ENCODE measurements at regions of chr15 and their contacts with region 1.

Region 1: GRCh38 chr15:39312984-39313383 is 267.9 kb upstream of the THBS1 start:
- DNase-seq: peak in 3 of 4 experiments; percentile 9 to 11 (median 10)
- ATAC-seq: no peak
- H3K4me3 ChIP-seq: no peak overlapping the region
- H3K27ac ChIP-seq: no peak overlapping the region
- H3K4me1 ChIP-seq: no peaks in the 10 kb centered on the region
- H3K27me3 ChIP-seq: no peaks in the 10 kb centered on the region
- CTCF ChIP-seq: peak in 2 of 3 experiments; percentile 24 to 34; a peak in 3 of 6 replicates
- EP300 ChIP-seq: no peak
- POLR2A ChIP-seq: no peak
- RAD21 ChIP-seq: peak in 1 of 2 experiments; percentile 48; a peak in 2 of 4 replicates

Region 2: DNA sequence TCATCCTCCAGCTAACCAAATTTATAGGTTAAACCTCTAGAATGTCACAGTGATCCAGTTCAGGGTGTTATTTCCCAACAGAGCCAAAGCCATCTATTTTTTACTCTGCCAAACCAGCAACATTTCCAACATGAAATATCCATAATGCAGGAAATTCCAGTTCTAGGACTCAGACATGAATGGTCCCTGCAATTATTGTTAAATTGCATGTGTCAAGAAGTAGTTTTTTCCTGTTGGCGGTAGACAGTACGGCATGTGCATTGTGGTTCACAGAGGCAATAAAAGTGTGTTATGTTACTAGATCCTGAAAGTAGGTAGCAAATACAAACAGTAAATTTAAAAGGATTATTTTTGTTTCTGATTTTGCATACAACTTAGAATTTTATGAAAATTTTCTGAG is 52.2 kb after region 1 on chr15:
- CTCF ChIA-PET with region 1: no interaction called
- POLR2A ChIA-PET with region 1: no interaction called
- in situ Hi-C with region 1: no loop called
- intact Hi-C with region 1: loop called (anchors 5 kb)
- DNase-seq: no peak
- ATAC-seq: no peak
- H3K4me3 ChIP-seq: no peak overlapping the region
- H3K27ac ChIP-seq: no peak overlapping the region
- H3K4me1 ChIP-seq: no peaks in the 10 kb centered on the region
- H3K27me3 ChIP-seq: no peaks in the 10 kb centered on the region
- CTCF ChIP-seq: no peak
- EP300 ChIP-seq: no peak
- POLR2A ChIP-seq: no peak
- RAD21 ChIP-seq: no peak